Uterus (tissue), 4 donors: ENCODE measurements at regions of chr22 and their contacts with region 1.

Region 1: DNA sequence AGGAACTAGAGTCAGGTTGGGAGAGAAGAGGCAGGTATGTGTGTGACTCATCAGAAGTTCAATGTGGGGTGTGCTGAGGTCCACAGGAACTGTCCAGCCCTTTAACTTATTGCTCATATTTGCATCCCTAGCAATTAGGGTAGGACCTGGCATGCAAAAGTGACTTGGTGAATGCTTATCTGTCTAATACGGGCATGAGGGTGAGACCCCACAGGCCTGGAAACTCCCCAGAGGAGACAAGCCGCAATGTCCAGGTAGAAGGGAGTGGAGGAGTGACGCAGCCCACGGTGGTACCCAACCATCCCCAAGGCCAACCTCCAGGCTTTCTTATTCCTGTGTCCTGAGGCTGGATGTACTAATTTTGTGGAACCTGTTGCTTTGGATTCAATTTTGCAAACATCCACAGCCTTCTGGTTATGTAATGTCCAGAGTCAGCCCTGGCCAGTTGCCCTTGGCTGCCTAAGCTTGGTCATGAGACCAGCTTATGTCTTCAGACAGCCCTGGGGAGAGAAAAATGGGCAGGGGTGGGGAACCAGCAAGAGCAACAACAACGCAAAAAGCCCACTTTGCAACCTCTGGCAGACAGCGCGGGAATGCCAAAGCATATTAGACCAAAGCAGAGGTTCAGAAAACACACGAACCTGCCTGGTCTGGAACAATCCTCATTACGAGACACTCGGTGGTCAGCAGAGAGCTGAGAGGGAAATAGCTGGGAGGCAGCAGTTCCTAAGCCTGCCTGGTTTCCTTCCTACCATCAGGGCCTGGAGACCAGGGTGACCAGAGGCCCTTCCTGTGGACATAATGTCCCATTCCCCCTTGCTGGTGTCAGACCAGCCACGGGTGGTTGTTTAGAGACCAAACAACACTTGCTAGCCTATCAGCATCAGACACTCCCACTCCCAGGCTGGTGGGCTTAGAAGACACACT is 49.3 kb downstream of the TIMP3 start:
- DNase-seq: peak; percentile 88 to 90
- H3K4me3 ChIP-seq: no peak overlapping the region
- H3K27ac ChIP-seq: peak overlapping the region; percentile 76 to 82
- H3K4me1 ChIP-seq: peaks cover 19 to 37% of the 10 kb centered on the region in 2 donors
- H3K27me3 ChIP-seq: no peaks in the 10 kb centered on the region
- CTCF ChIP-seq: peak in 1 of 4 experiments; percentile 8
- POLR2A ChIP-seq: no peak

Region 2: DNA sequence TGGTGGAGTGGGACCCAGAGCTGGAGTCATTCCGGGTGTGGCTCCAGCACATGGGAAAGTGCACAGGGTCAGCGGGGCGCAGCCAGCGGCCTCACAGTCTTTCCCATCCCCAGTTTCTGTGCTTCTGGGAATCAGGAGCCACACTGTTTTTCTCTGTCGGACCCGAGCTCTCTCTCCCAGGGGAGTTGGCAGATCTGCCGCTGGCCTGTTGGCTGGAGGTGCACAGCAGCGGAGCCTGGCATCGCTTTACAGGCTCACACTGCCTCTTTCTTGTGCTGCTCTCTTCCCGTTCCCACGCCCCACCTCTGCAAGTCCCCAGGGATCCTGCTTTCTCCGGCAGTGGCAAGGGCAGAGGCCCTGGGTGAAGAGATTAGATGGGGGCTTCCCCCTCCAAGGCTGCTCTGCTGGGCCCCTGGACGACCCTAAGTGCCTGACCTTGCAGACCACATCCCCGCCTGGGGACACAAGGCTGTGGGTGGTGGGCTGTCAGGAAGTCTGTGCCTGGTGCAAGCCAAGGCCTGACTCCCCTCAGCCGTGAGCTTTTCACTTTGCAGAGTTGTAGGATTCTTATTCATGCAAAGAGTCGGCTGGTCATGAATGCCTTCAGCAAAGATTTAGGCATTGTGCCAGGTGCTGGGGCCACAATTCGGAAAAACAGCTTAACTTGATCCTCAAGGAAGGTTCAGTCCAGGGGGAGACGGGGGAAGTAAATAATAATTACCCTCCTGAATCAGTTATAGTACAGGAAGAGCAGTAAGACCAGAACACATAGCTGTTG is 66.9 kb after region 1 on chr22:
- intact Hi-C with region 1: loop called (anchors 10 kb)
- DNase-seq: no peak
- H3K4me3 ChIP-seq: no peak overlapping the region
- H3K27ac ChIP-seq: no peak overlapping the region
- H3K4me1 ChIP-seq: no peaks in the 10 kb centered on the region
- H3K27me3 ChIP-seq: no peaks in the 10 kb centered on the region
- CTCF ChIP-seq: no peak
- POLR2A ChIP-seq: no peak

Region 3: DNA sequence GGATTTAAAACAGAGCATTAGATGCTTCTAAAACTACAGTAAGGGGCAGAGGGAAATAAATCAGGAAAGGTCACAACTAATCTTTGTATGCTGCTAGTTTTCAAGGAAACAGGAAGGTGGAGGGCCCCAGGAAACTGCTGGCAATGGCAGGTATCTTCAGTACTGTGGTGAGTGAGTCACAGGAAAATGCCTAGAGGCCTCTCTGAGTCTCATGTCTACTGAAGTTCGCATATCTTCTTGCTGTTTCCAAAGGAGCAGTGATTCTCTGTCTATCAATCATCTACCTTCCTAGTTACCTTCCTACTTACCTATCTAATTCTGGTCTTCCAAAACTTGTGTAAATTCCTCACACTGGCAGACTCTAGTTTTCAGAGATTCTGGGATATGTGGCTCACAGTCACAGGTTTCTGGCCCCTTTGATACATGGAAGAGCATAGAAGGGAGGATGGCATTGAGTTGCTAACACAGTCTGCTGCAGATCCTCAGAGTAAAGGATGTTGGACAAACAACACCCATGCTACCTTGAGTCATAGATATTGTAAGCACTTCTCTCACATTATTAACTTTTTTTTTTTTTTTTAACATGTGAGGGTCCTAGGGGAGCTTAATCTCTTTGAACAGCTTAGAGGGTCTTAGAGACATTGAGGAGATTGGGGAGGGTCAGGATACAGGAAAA is 266.2 kb after region 1 on chr22:
- intact Hi-C with region 1: no loop called
- DNase-seq: no peak
- H3K4me3 ChIP-seq: no peak overlapping the region
- H3K27ac ChIP-seq: no peak overlapping the region
- H3K4me1 ChIP-seq: no peaks in the 10 kb centered on the region
- H3K27me3 ChIP-seq: no peaks in the 10 kb centered on the region
- CTCF ChIP-seq: no peak
- POLR2A ChIP-seq: no peak